Activated CD4-positive, alpha-beta T cell treated with anti-CD3 and anti-CD28 coated beads for 36 hours (primary cell): ENCODE measurements at regions of chr6 and their contacts with region 1.

Region 1: DNA sequence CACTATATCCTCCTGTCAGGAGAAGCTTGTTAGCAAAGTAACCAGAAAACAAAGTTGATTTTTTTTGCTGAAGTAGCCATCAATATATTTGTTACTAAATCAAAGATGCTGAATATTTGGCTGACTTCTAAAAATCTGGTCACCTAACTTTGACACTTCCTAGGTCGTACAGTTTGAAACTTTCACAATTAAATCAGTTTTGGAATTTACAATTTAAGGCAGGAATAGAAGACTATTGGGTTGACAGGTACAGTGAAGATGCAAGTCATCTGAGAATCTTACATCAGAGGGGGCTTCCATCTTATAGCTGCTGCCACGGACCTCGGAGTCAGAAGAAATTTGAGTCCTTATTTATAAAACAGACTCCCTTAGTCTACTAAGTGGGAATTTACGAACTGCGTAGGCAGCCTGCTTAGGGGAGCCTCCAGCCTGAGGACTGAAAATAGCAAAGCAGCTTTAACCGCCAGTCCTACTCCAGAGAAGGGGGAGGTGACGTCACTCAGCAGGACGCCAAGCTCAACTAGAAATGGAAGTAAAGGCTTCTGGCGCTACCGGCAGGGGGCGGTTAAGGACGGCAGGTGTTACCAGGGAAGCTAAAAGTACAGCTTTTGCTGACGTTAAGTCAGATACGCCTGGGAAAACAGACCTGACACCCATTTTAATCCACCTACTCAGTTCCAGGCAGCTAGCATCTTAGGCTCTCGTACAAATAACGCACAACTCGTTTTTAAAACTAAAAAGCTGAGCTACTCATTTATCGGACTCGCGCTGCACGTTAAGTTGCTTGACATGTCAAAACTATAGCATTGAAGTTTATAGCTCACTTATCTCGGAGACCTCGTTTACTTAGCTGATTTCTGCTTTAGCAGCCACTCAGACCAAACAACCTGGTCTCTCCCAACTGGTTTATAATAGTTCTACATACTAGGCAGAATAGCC is 61.1 kb upstream of the HFE start:
- DNase-seq: peak; percentile 96
- ATAC-seq: peak; percentile 39
- H3K4me3 Mint-ChIP-seq: peak overlapping the region; percentile 81
- H3K27ac Mint-ChIP-seq: peak overlapping the region; percentile 98
- H3K4me1 Mint-ChIP-seq: peaks cover 51% of the 10 kb centered on the region
- H3K27me3 Mint-ChIP-seq: no peaks in the 10 kb centered on the region

Region 2: GRCh38 chr6:25801436-25801835 is 224.7 kb before region 1 on chr6:
- CTCF ChIA-PET with region 1: no interaction called
- POLR2A ChIA-PET with region 1: no interaction called
- intact Hi-C with region 1: no loop called
- DNase-seq: no peak
- ATAC-seq: no peak
- H3K4me3 Mint-ChIP-seq: no peak overlapping the region
- H3K27ac Mint-ChIP-seq: no peak overlapping the region
- H3K4me1 Mint-ChIP-seq: no peaks in the 10 kb centered on the region
- H3K27me3 Mint-ChIP-seq: peaks cover 9% of the 10 kb centered on the region

Region 3: DNA sequence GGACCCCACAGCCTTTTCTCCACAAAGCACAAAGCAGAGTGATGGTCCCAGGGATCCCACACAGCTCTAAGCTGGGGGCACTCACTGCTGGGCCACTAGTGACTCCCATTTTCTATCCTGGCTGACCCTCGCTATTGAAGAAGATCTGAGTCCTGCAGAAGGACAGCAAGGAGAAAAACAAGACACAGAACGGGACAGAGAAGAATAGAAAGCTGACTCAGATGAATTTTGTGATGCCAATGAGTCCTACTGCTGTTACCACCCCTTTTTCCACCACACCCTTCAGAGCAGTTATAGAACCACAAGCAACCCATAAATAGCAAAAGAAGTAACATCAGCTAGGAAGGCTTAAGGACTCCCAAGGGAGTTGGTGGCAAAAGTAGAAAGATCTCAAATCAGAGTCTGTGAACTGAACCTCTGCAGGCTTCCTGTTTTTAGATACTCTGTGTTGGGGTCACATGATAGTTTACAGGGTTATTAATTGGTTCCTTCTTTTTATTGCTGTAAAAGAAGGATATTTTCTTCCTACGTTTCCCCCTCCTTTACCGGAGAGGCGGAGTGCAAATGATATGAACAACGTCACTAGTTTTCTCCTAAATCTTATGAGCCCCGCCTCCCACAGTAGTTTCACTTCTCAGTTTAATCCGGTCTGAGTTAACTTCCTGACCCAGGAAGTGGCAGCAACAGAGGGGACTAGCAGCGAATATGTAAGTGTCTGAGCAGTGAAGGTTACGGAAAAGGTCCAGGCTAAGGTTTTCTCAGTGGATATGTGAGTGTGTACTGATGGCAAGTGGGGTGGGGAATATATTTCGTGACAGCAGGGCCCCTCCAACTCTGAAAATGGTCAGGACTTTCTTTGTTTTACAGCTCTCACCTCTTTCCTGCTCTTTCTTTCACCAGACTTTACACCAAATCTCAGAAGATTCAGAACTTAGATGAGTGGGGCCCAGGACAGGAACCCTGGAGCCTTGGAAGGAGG is 63.7 kb before region 1 on chr6 and contains the start of gene TRIM38:
- CTCF ChIA-PET with region 1: no interaction called
- POLR2A ChIA-PET with region 1: interaction called, 17 read pairs
- intact Hi-C with region 1: loop called in 1 of 2 experiments (anchors 2 kb)
- DNase-seq: peak; percentile 82
- ATAC-seq: peak; percentile 80
- H3K4me3 Mint-ChIP-seq: peak within 1 kb of the TSS; percentile 96
- H3K27ac Mint-ChIP-seq: peak within 1 kb of the TSS; percentile 100
- H3K4me1 Mint-ChIP-seq: peaks cover 74% of the 10 kb centered on the region
- H3K27me3 Mint-ChIP-seq: no peaks in the 10 kb centered on the region
- total RNA-seq, gene TRIM38: 24.9 TPM

Region 4: GRCh38 chr6:26054857-26055669 is 28.9 kb after region 1 on chr6:
- CTCF ChIA-PET with region 1: interaction called, 8 read pairs
- POLR2A ChIA-PET with region 1: interaction called, 50 read pairs
- intact Hi-C with region 1: loop called (anchors 1 kb)
- DNase-seq: peak; percentile 91
- ATAC-seq: peak; percentile 70
- H3K4me3 Mint-ChIP-seq: peak overlapping the region; percentile 96
- H3K27ac Mint-ChIP-seq: peak overlapping the region; percentile 99
- H3K4me1 Mint-ChIP-seq: peaks cover 13% of the 10 kb centered on the region
- H3K27me3 Mint-ChIP-seq: no peaks in the 10 kb centered on the region

Region 5: DNA sequence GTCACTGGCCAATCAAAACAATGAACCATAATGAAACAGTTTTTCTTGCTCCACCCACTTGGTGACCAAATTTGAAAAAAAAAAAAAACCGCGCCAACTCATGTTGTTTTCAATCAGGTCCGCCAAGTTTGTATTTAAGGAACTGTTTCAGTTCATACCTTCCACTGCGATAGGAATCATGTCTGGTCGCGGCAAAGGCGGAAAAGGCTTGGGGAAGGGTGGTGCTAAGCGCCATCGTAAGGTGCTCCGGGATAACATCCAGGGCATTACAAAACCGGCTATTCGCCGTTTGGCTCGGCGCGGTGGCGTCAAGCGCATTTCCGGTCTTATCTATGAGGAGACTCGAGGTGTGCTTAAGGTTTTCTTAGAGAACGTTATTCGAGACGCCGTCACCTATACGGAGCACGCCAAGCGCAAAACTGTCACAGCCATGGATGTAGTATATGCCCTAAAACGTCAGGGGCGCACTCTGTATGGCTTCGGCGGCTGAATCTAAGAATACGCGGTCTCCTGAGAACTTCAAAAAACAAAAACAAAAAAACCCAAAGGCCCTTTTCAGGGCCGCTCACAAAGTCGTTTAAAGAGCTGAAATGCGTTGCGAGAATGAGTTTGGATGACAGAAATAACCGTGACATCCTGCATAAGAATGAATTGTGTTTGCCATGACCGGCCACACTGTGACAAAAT is 77.8 kb after region 1 on chr6:
- CTCF ChIA-PET with region 1: interaction called, 4 read pairs
- POLR2A ChIA-PET with region 1: interaction called, 9 read pairs
- intact Hi-C with region 1: loop called in 1 of 2 experiments (anchors 1 kb)
- DNase-seq: peak; percentile 92
- ATAC-seq: peak; percentile 89
- H3K4me3 Mint-ChIP-seq: peak overlapping the region; percentile 82
- H3K27ac Mint-ChIP-seq: peak overlapping the region; percentile 97
- H3K4me1 Mint-ChIP-seq: peaks cover 16% of the 10 kb centered on the region
- H3K27me3 Mint-ChIP-seq: no peaks in the 10 kb centered on the region